Kidney (tissue), 22 donors: ENCODE measurements at regions of chr12 and their contacts with region 1.

Region 1: GRCh38 chr12:2583091-2583497 is 211.7 kb upstream of the FKBP4 start:
- DNase-seq: peak; percentile 66 to 84 (median 78)
- H3K4me3 ChIP-seq: no peak overlapping the region
- H3K27ac ChIP-seq: no peak overlapping the region
- H3K4me1 ChIP-seq: peaks cover 0 to 4% (median 0%) of the 10 kb centered on the region in 3 donors
- H3K27me3 ChIP-seq: no peaks in the 10 kb centered on the region
- CTCF ChIP-seq: peak; percentile 97

Region 2: GRCh38 chr12:2057041-2057794 is 525.9 kb before region 1 on chr12:
- intact Hi-C with region 1: loop called (anchors 10 kb)
- DNase-seq: peak in 4 of 5 donors; percentile 85 to 92 (median 88)
- H3K4me3 ChIP-seq: no peak overlapping the region
- H3K27ac ChIP-seq: no peak overlapping the region
- H3K4me1 ChIP-seq: peaks cover 0 to 3% (median 0%) of the 10 kb centered on the region in 3 donors
- H3K27me3 ChIP-seq: no peaks in the 10 kb centered on the region
- CTCF ChIP-seq: peak; percentile 69